ENCODE measurements at regions of chr9 and their contacts with region 1.

Region 1: DNA sequence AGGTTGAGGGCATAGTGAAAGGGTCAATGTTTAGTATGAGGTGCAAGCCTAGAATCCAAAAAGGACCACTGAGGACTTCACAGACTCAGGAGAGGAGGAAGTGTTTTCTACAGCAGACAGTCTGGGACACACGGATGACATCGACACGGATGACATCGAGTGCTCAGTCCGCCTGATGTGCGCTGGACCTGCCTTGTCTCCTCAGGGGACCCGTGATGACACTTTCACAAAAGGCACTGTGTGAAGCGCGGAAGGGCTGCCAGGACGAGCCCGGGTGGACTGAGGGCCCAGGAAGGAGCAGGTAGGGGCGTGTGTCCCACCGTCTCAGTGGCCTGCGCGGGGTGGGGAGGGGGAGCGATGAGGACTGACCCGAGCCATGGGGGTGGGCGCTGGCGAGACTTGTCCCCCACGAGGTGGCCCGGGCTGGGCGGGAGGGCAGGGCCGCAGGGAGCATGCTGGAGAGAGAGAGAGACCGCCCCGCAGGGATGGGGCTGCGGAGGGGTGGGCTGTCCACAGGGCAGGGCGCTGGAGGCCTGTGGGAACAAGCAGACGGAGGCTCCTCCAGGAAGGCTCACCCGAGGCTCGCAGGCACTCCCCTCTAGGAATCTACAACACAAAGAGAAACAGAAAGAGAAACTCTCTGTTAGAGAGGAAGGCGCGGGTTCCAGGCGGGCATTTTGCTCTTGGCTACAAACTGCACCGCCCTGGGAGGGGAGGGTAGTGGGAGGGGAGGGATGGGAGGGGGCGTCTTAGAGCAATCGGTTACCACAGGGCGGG is 54.9 kb downstream of the USP20 start:
- H3K4me3 Mint-ChIP-seq: peak overlapping the region; percentile 67
- H3K27ac Mint-ChIP-seq: peak overlapping the region; percentile 86
- H3K4me1 Mint-ChIP-seq: peaks cover 79% of the 10 kb centered on the region
- H3K27me3 Mint-ChIP-seq: no peaks in the 10 kb centered on the region

Region 2: GRCh38 chr9:129919841-129920240 is 29.7 kb after region 1 on chr9:
- intact Hi-C with region 1: loop called (anchors 2 kb)
- H3K4me3 Mint-ChIP-seq: no peak overlapping the region
- H3K27ac Mint-ChIP-seq: peak overlapping the region; percentile 83
- H3K4me1 Mint-ChIP-seq: peaks cover 46% of the 10 kb centered on the region
- H3K27me3 Mint-ChIP-seq: no peaks in the 10 kb centered on the region

Region 3: DNA sequence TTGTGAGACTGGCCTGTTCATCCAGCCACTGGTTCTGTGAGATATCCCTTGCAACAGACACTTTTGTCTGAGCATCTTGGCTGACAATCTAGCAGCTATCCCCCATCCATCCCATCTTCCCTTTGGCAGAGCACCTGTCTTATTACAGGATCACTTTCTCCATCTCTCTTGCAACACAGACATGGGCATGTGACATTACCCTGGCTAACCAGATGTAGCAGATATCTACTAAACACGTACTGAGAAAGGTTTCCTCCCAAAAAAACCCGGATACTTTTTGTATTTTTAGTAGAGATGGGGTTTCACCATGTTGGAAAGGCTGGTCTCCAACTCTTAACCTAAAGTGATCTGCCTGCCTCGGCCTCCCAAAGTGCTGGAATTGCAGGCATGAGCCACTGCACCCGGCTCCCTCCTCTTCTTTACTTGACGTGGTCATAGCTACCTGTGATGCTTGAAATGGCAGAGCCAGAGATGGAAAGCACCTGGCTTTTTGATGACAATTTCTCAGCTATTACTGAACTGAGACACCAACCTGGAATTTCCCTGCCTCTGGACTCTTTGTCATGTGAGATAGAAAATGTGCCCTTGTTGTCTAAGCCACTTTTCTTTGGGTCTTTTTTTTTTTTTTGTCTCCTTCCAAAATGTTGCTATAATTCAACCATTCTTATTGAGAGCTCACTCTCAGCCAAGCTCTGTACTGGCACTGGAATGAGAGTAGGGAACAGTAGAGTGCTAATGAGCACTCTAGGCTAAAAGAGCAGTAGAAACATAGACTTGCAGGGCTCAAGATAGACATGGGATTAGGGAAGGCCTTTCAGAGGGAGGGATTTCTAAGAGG is 120.2 kb after region 1 on chr9:
- intact Hi-C with region 1: no loop called
- H3K4me3 Mint-ChIP-seq: no peak overlapping the region
- H3K27ac Mint-ChIP-seq: peak overlapping the region; percentile 43
- H3K4me1 Mint-ChIP-seq: peaks cover 46% of the 10 kb centered on the region
- H3K27me3 Mint-ChIP-seq: no peaks in the 10 kb centered on the region